GM18951 (cell line): ENCODE measurements at regions of chr11 and their contacts with region 1.

Region 1: GRCh38 chr11:58856806-58857205 is 12.3 kb upstream of the GLYATL2 start:
- POLR2A ChIP-seq: no peak

Region 2: GRCh38 chr11:57150454-57150917 is 1706.3 kb before region 1 on chr11:
- in situ Hi-C with region 1: loop called (anchors 10 kb)
- POLR2A ChIP-seq: no peak

Region 3: DNA sequence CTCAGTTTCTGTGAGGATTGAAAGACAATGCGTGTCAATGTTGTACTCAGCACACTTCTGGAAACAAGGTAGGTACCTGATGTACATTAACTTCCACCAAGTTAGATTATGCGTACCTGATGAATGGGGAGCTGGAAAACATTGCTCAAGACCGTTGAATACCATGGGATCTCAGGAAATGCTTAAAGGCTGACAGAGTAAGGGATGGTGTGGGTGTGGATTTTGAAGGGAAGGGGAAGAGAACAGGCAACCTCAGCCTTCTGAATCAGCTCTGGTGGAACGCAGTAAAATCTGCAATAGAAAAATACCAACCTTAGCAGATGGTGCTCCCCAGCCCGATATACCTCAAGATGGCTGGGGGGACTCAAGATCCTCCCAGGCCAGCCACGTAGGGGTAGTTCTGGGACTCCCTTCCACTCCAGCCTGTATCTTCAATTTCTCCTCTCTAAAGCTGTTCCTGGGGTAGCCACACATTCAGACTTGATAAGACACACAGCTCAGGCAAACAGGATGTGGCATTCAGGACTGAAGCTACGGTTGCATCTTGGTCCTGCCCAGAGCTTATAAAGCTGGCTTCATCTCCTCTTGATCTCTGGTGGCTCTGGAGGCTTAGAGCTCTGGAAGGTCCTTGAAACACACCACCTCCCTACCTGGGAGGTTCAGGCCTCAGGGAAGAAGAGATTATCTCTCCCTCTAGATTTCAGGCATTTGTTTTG is 983.5 kb before region 1 on chr11:
- in situ Hi-C with region 1: no loop called
- POLR2A ChIP-seq: no peak

Region 4: DNA sequence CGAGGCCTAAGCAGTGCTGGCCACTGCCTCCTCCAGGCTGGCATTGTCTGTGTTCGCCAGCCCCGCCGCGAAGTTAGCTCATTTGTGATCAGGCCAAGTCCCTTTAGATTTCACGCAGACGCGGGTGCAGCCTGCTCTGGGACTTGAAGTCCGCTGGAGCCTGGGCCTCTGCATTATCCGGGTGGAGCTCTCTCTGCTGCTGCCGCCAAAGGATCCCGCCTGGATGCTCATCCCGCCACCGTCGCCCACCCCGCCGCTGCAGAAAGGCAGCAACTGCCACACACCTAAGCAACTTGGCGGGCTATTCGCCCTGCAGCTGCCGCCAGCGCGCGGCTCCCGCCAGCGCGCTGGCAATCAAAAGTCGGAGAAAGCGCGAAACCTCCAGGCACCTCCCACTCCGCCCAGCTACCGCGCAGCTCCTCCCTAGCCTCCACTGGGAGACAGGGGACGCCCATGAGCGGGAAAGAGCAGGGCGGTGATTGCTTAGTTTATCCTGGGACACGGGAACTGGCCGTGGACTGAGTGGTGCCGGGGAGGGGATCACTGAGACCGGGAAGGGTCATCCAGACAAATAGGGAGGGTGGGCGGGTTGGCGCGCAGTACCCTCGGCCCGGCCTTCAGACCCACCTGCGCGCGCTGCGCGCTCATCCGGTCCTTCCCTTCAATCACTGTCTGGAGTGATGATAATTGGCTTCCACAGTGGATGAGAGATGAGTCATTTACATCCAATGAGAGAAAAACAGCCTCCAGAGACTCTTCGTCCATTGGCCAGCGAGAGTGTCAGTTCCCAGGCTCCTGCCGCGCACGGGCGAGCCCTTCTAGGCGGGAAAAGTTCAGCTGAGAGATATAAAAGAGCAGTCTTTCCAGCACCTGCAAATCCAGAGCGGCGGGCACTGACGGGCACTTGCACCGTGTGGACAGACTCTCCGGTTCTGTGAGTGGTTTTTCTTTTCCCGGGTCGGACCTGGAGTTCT is 249.8 kb after region 1 on chr11 and contains the start of gene FAM111B:
- in situ Hi-C with region 1: no loop called
- POLR2A ChIP-seq: peak; percentile 76